A673 (cell line): ENCODE measurements at regions of chr9 and their contacts with region 1.

Region 1: DNA sequence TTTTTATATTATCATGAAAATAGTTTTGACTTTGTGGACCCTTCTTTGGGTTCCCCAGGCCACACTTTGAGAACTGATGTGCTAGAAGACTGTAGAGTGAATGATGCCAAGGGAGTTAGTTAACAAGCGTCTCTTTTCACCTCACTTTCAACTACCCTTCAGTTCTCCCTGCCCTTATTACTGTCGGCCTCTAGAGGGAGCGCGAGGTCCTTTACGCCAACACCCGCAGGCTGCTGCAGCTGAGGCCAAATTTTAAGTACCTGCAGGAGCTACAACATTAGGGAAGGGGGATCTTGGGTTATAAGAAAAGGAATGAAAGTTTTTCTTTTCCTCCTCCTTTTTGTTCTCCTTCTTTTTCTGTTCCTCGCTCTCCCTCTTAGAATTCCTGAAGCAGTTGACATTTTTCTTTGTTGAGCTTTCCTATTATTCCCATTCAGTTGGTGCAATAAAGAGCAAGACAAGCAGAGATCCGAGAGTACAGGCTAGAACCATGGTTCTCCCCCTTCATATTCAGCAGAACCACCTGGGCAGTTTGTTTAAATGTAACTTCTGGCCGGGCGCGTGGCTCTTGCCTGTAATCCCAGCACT is 84.0 kb downstream of the ZFAND5 start:
- DNase-seq: peak; percentile 72
- H3K4me3 ChIP-seq: no peak overlapping the region
- H3K27ac ChIP-seq: no peak overlapping the region
- H3K4me1 ChIP-seq: no peaks in the 10 kb centered on the region
- H3K27me3 ChIP-seq: no peaks in the 10 kb centered on the region
- CTCF ChIP-seq: peak; percentile 92

Region 2: GRCh38 chr9:72592502-72593403 is 311.7 kb after region 1 on chr9:
- CTCF ChIA-PET with region 1: interaction called, 3 read pairs
- POLR2A ChIA-PET with region 1: no interaction called
- intact Hi-C with region 1: loop called (anchors 2 kb)
- DNase-seq: peak; percentile 67
- H3K4me3 ChIP-seq: no peak overlapping the region
- H3K27ac ChIP-seq: no peak overlapping the region
- H3K4me1 ChIP-seq: no peaks in the 10 kb centered on the region
- H3K27me3 ChIP-seq: no peaks in the 10 kb centered on the region
- CTCF ChIP-seq: peak; percentile 83

Region 3: GRCh38 chr9:72753266-72753893 is 472.4 kb after region 1 on chr9:
- CTCF ChIA-PET with region 1: no interaction called
- POLR2A ChIA-PET with region 1: no interaction called
- intact Hi-C with region 1: loop called (anchors 5 kb)
- DNase-seq: peak; percentile 5
- H3K4me3 ChIP-seq: no peak overlapping the region
- H3K27ac ChIP-seq: no peak overlapping the region
- H3K4me1 ChIP-seq: no peaks in the 10 kb centered on the region
- H3K27me3 ChIP-seq: peaks cover 5% of the 10 kb centered on the region
- CTCF ChIP-seq: peak; percentile 40; the same call in 1 of the 2 replicates

Region 4: GRCh38 chr9:72827950-72828731 is 547.1 kb after region 1 on chr9:
- CTCF ChIA-PET with region 1: interaction called, 14 read pairs
- POLR2A ChIA-PET with region 1: no interaction called
- intact Hi-C with region 1: loop called (anchors 2 kb)
- DNase-seq: no peak
- H3K4me3 ChIP-seq: no peak overlapping the region
- H3K27ac ChIP-seq: no peak overlapping the region
- H3K4me1 ChIP-seq: no peaks in the 10 kb centered on the region
- H3K27me3 ChIP-seq: no peaks in the 10 kb centered on the region
- CTCF ChIP-seq: no peak